Endothelial cell of umbilical vein (primary cell): ENCODE measurements at regions of chr12 and their contacts with region 1.

Region 1: DNA sequence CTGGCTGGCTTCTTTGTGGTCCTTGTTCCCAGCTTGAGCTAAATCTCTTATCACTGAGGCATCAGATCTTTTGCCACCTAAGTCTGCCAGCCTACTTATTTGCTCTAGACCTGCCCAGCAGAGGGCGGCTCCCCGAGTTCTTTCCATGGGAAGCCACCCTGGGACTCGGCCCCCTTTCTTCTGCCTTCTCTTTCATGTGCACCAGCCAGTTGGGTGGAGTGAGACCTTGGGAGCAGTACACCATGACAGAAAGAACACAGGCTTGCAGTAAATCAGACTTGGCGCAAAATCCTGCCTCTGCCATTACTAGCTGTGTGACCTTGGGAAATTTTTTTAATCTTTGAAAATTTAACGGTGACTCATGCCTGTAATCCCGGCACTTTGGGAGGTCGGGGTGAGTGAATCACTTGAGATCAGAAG is 7.4 kb downstream of the SMAGP start:
- DNase-seq: peak; percentile 63
- H3K4me3 ChIP-seq: no peak overlapping the region
- H3K27ac ChIP-seq: no peak overlapping the region
- H3K4me1 ChIP-seq: peaks cover 2% of the 10 kb centered on the region
- H3K27me3 ChIP-seq: no peaks in the 10 kb centered on the region
- CTCF ChIP-seq: peak; percentile 38 to 61
- POLR2A ChIP-seq: no peak

Region 2: GRCh38 chr12:51246254-51246853 is 16.4 kb before region 1 on chr12:
- CTCF ChIA-PET with region 1: interaction called, 7 read pairs
- POLR2A ChIA-PET with region 1: no interaction called
- dilution Hi-C with region 1: no loop called
- intact Hi-C with region 1: loop called (anchors 2 kb)
- DNase-seq: peak; percentile 49
- H3K4me3 ChIP-seq: no peak overlapping the region
- H3K27ac ChIP-seq: peak overlapping the region; percentile 10
- H3K4me1 ChIP-seq: peaks cover 22% of the 10 kb centered on the region
- H3K27me3 ChIP-seq: no peaks in the 10 kb centered on the region
- CTCF ChIP-seq: peak in 1 of 2 donors; percentile 4
- POLR2A ChIP-seq: no peak